SK-N-SH (cell line): ENCODE measurements at regions of chr7 and their contacts with region 1.

Region 1: DNA sequence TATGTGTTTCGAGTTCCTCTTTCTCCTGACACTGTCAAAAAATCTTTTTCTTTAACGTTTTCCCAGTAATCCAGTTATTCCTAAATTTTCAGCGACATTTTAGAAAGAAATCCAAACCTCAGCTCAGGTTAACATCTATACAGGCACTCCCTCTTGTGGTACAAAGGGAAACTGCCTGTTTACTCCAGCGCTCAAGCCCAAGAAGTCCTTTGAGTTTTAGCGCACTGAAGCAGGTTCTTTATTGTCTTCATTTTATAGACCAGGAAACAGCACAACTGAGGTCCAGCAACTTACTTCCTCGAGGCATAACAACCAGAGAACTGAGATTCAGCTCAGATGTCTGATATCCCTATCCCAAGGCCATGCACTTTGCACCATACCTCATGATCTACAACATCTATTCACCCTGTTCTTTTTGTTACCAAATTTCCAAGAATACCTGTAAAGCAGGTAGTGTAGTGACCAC is 287.2 kb upstream of the MKLN1 start:
- DNase-seq: peak; percentile 80
- H3K4me3 ChIP-seq: no peak overlapping the region; a peak in 1 of 4 replicates
- H3K27ac ChIP-seq: peak overlapping the region; percentile 0 to 66; a peak in 2 of 4 replicates
- H3K4me1 ChIP-seq: peaks cover 4 to 16% of the 10 kb centered on the region in 2 experiments; a peak in 3 of 4 replicates
- H3K27me3 ChIP-seq: no peaks in the 10 kb centered on the region
- CTCF ChIP-seq: peak; percentile 100
- EP300 ChIP-seq: no peak
- RAD21 ChIP-seq: peak; percentile 97

Region 2: DNA sequence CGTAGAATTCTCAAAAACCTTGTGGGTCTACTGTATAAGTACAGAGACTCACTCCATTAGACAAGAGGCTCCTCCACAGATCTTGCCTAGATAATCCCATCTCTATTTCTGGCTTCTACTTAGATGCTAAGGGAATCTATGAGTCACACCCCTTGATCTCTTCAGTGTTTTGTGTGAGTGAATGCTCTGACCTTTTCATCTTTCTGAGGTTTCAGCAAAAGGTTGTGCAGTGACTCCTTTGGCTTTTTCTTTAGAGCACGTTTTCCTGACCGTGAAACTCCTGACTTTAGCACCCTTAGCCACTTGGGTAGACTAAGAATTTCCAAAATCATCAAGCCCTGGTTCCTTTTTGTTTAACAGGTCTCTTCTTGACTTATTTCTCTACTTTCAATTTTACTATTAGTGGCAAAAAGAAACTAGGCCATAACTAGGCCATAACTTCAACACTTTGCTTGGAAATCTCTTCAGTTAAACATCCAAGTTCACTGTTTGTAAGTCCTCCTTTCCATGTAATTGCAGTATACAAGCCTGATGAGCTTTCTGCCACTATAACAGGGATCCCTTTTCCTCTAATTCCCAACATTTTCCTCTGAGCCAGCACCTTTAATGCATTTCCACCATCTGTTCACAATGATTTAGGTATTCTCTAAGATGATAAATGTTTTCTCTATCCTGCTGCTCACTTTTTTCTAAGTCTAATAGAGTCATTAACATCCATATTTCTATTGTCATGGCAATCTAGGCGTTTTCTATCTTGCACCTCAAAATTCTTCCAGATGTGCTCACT is 391.3 kb before region 1 on chr7:
- CTCF ChIA-PET with region 1: no interaction called
- POLR2A ChIA-PET with region 1: no interaction called
- DNase-seq: no peak
- H3K4me3 ChIP-seq: no peak overlapping the region
- H3K27ac ChIP-seq: peak overlapping the region in 1 of 2 experiments; percentile 37; a peak in 2 of 4 replicates
- H3K4me1 ChIP-seq: no peaks in the 10 kb centered on the region
- H3K27me3 ChIP-seq: no peaks in the 10 kb centered on the region
- CTCF ChIP-seq: no peak
- EP300 ChIP-seq: no peak
- RAD21 ChIP-seq: no peak

Region 3: GRCh38 chr7:130884437-130885417 is 155.8 kb before region 1 on chr7:
- CTCF ChIA-PET with region 1: interaction called, 18 read pairs
- POLR2A ChIA-PET with region 1: no interaction called
- DNase-seq: no peak
- H3K4me3 ChIP-seq: no peak overlapping the region
- H3K27ac ChIP-seq: peak overlapping the region; percentile 0 to 100; a peak in 2 of 4 replicates
- H3K4me1 ChIP-seq: peaks cover 4 to 78% of the 10 kb centered on the region in 2 experiments; a peak in 3 of 4 replicates
- H3K27me3 ChIP-seq: no peaks in the 10 kb centered on the region
- CTCF ChIP-seq: no peak
- EP300 ChIP-seq: no peak
- RAD21 ChIP-seq: no peak

Region 4: DNA sequence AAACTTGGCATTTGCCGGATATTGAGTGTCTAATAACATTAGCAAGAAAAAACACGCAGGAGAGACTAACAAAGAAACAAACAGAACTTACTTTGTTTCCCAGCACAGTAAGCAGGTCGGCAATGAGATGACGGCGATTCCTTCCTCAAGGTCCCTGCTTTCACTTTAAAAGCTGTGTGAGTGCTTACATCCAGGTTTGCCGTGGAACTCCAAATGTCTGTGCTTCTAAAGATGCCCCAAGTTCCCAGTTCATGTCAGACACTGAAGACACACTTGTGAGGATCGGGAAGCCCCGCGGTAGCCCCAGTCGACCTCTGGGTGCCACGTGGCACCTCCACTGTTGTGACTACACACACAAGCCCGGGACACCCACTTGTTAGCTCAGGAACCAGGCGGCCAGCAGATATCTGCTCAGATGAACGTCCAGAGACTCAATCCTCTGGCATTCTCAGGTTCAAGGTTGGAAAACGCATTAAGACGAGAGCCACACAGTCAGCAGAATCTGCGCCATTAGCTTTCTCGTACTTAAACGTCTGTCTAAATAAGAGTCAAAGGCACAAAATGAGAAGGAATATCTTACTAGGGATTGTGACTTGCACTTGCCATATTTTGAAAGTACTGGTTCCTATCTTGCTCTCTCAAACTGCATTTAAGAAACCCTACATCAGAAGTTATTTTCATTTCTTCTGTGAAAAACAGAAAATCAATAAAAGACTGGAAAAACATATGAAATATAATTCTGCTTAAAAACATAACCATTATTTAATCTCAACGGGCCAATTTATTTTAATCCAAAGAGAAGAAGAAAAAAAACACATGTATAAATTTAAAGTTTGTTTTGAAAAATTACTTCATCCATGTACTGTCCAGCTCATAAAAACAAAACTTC is 98.9 kb before region 1 on chr7:
- CTCF ChIA-PET with region 1: interaction called, 23 read pairs
- POLR2A ChIA-PET with region 1: no interaction called
- DNase-seq: no peak
- H3K4me3 ChIP-seq: peak overlapping the region; percentile 42
- H3K27ac ChIP-seq: peak overlapping the region; percentile 52 to 72; a peak in 3 of 4 replicates
- H3K4me1 ChIP-seq: peaks cover 2 to 45% of the 10 kb centered on the region in 2 experiments
- H3K27me3 ChIP-seq: no peaks in the 10 kb centered on the region
- CTCF ChIP-seq: no peak
- EP300 ChIP-seq: no peak
- RAD21 ChIP-seq: no peak

Region 5: GRCh38 chr7:130988443-130988842 is 52.1 kb before region 1 on chr7:
- CTCF ChIA-PET with region 1: interaction called, 182 read pairs
- POLR2A ChIA-PET with region 1: no interaction called
- DNase-seq: peak; percentile 48
- H3K4me3 ChIP-seq: no peak overlapping the region
- H3K27ac ChIP-seq: peak overlapping the region in 1 of 2 experiments; percentile 3; a peak in 1 of 4 replicates
- H3K4me1 ChIP-seq: peaks cover 0 to 4% of the 10 kb centered on the region in 2 experiments; a peak in 1 of 4 replicates
- H3K27me3 ChIP-seq: no peaks in the 10 kb centered on the region
- CTCF ChIP-seq: no peak
- EP300 ChIP-seq: no peak
- RAD21 ChIP-seq: no peak

Region 6: GRCh38 chr7:131015655-131015954 is 24.9 kb before region 1 on chr7:
- CTCF ChIA-PET with region 1: interaction called, 13 read pairs
- POLR2A ChIA-PET with region 1: interaction called, 3 read pairs
- DNase-seq: no peak
- H3K4me3 ChIP-seq: no peak overlapping the region
- H3K27ac ChIP-seq: no peak overlapping the region
- H3K4me1 ChIP-seq: peaks cover 25 to 34% of the 10 kb centered on the region in 2 experiments
- H3K27me3 ChIP-seq: no peaks in the 10 kb centered on the region
- CTCF ChIP-seq: no peak
- EP300 ChIP-seq: no peak
- RAD21 ChIP-seq: no peak

Region 7: DNA sequence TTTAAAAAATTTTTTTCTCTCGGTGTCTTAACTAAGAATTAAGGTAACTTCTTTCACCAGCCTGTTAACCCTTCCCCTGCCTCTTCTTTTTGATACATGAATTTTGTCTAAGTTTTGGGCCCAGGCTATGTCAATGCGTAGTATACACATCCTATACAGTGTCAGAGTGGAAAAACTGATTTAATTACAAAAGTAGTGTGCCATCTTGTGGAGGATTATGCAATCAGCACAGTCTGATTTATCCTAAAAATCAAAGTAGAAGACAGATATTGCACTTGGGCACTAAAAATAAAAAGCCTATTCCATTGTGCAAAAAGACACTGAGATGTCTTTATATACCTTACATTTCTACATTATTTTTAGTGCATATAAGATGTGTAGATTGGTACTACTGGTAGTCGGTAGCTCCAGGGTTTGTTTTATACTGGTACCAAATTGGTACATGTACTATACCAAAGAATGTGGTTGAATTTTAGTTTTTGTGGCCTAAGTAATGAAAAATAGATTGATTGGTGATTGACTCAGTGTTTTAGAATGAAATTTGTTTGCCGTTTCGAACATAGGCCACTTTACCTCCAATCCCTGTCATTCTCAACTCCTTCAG is 383.8 kb after region 1 on chr7:
- CTCF ChIA-PET with region 1: interaction called, 11 read pairs
- POLR2A ChIA-PET with region 1: no interaction called
- DNase-seq: peak; percentile 52
- H3K4me3 ChIP-seq: no peak overlapping the region
- H3K27ac ChIP-seq: no peak overlapping the region
- H3K4me1 ChIP-seq: no peaks in the 10 kb centered on the region; a peak in 1 of 4 replicates
- H3K27me3 ChIP-seq: no peaks in the 10 kb centered on the region
- CTCF ChIP-seq: peak; percentile 94
- EP300 ChIP-seq: no peak
- RAD21 ChIP-seq: peak; percentile 85